Mammary epithelial cell (primary cell): ENCODE measurements at regions of chr6 and their contacts with region 1.

Region 1: DNA sequence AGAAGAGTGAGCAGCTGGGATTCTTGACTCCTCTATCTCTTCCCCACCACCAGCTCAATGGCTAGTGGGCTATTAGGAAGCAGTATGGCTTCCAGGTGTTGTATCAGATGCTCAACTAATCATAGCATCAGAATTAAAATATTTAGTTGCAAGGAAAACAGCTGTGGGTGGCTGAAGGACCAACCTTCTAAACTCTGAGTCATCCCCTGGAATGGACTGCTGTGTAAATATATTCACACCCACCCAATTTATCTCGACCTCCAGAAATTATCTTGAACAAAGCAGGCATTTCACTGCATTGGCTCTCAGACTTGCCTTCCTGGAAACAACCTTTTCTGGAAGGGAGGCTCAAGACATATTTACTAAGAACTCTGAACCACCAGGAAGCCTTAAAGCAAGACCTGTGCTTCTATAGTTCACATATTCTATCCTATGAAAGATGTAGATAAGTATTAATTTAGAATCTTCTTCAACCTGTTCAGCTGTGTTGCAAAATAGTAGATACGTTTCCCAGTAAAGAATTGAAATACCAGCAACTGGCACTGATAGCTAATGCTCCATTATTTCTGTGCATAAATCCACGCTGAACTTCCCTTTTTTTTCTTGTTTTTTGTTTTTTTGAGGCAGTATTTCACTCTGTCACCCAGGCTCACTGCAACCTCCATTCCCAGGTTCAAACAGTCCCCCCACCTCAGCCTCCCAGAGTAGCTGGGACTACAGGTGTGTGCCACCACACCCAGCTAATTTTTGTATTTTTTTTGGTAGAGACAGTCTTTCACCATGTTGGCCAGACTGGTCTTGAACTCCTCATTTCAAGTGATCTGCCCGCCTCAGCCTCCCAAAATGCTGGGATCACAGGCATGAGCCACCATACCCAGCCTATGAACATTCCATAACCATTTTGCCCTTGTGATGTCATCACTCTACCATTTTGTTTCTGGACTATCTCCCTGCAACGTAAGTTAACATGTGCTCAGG is 56.9 kb upstream of the CD2AP start:
- DNase-seq: peak; percentile 23
- H3K4me3 ChIP-seq: no peak overlapping the region
- H3K27ac ChIP-seq: no peak overlapping the region
- H3K4me1 ChIP-seq: peaks cover 4% of the 10 kb centered on the region
- H3K27me3 ChIP-seq: no peaks in the 10 kb centered on the region
- CTCF ChIP-seq: no peak

Region 2: DNA sequence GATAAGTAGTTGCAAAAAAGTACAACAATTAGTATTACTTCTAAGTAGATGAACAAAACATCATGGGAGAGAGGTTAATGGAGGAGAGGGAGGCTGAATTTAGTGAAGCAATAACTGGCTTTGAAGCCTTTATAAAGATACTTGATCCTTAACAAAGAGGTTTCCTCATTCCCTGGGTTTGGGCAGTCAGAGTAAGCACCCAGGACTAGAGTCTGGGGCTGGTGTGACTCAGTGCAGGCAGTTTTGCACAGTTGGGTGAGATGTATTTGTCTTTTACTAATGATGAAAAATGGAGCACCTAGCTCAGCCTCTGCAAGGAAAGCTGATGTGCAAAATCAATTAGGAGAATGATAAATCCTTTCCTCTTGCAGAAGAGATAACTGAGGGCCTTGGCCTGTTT is 349.3 kb after region 1 on chr6:
- CTCF ChIA-PET with region 1: no interaction called
- dilution Hi-C with region 1: no loop called
- in situ Hi-C with region 1: loop called in 1 of 2 experiments (anchors 10 kb)
- intact Hi-C with region 1: no loop called
- DNase-seq: no peak
- H3K4me3 ChIP-seq: no peak overlapping the region
- H3K27ac ChIP-seq: no peak overlapping the region
- H3K4me1 ChIP-seq: no peaks in the 10 kb centered on the region
- H3K27me3 ChIP-seq: no peaks in the 10 kb centered on the region
- CTCF ChIP-seq: no peak

Region 3: GRCh38 chr6:48087448-48087847 is 666.8 kb after region 1 on chr6:
- CTCF ChIA-PET with region 1: no interaction called
- dilution Hi-C with region 1: no loop called
- in situ Hi-C with region 1: no loop called
- intact Hi-C with region 1: no loop called
- DNase-seq: no peak
- H3K4me3 ChIP-seq: no peak overlapping the region
- H3K27ac ChIP-seq: no peak overlapping the region
- H3K4me1 ChIP-seq: no peaks in the 10 kb centered on the region
- H3K27me3 ChIP-seq: no peaks in the 10 kb centered on the region
- CTCF ChIP-seq: peak; percentile 44 to 48